ENCODE measurements at regions of chr1 and their contacts with region 1.

Region 1: DNA sequence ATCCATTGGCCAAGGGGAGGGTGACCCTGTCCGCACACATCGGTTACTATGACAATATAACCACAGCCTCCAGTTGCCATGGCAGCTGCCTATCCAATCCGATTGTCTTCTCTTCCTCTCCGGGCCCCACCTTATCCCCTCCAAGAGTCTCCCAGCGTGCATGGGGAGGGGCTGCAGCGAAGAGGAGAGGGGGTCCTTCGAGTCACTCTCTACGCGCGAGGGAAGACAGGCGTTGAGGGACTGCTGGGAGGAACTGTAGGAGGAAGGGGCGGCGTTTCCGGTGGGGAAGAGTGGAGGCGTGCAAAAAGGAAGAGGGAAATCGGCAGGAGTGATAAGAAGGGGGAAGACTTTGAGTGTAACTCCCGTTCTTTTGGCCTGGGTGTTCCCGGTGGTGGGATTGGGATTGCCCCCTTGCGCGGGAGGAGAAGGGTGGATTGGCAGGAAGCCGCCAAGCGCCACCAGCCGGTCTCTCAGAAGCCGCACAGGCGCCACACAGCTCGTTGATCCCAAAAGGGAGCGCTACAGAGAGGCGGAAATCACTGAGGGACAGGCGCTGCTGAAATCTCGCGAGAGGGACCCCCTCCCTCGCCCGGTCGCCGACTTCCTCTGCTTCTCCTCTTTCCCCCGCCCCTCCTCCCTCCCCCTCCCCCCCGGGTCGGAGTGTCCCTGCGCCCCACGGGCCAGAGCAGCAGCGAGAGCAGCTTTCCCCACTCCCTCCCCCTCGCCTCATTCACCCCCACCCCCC is 384 bp upstream of the SMG7 start:
- DNase-seq: peak; percentile 99
- ATAC-seq: peak; percentile 61
- H3K4me3 Mint-ChIP-seq: peak overlapping the region; percentile 86
- H3K27ac Mint-ChIP-seq: peak overlapping the region; percentile 99
- H3K4me1 Mint-ChIP-seq: peaks cover 26% of the 10 kb centered on the region
- H3K27me3 Mint-ChIP-seq: no peaks in the 10 kb centered on the region

Region 2: GRCh38 chr1:182415789-182416188 is 1056.1 kb before region 1 on chr1:
- CTCF ChIA-PET with region 1: no interaction called
- POLR2A ChIA-PET with region 1: no interaction called
- intact Hi-C with region 1: no loop called
- DNase-seq: no peak
- ATAC-seq: peak; percentile 64
- H3K4me3 Mint-ChIP-seq: no peak overlapping the region
- H3K27ac Mint-ChIP-seq: no peak overlapping the region
- H3K4me1 Mint-ChIP-seq: no peaks in the 10 kb centered on the region
- H3K27me3 Mint-ChIP-seq: peaks cover 31% of the 10 kb centered on the region

Region 3: DNA sequence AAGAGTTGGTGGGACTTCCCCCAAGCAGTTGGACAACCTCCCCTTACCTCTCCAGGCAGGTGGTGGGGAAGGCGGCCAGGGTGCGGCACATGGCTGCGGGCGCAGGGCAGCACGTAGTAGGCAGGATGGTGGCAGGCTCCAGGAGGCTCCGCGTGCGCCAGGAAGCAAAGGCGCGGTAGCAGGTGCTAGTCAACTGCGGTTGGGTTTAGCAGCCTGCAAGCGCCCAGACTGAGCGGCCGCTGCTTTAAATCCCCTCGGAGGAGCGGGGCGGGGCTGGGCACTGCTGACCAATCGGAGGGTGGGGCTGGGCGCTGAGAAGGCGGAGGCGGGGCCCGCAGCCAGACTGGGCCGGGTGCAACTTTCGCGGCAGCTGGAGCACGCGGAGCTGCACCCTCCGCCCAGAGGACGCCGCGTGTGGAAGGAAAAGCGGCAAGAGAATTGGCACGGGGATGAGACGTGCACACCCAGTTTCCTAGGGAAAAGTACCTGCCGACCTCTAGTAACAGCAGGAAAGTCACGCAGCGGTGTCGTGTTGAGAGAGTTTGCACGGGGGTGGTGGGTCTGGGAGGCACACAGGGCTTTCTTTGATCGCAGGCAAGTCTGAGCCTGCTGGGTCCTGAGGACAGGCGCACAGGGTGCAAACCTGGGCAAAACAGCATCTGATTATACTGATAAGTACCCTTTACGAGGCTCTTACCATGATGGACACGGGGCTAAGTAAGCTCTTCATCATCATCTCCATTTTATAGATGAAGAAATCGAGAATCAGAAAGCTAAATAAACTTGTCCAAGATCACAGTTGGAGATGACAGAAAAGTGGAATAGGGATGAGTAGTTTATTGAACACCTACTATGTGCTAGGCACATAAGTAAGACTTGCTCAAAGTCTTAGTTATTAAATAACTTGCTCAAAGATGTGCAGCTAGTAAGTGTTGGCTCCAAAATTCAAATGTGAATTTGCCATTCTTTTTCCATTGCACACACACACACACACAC is 867.4 kb before region 1 on chr1 and contains the start of gene RGS16:
- CTCF ChIA-PET with region 1: no interaction called
- POLR2A ChIA-PET with region 1: no interaction called
- intact Hi-C with region 1: loop called in 1 of 2 experiments (anchors 10 kb)
- DNase-seq: peak; percentile 97
- ATAC-seq: peak; percentile 88
- H3K4me3 Mint-ChIP-seq: no peak within 1 kb of the TSS
- H3K27ac Mint-ChIP-seq: peak within 1 kb of the TSS; percentile 70
- H3K4me1 Mint-ChIP-seq: peaks cover 43% of the 10 kb centered on the region
- H3K27me3 Mint-ChIP-seq: peaks cover 6% of the 10 kb centered on the region
- total RNA-seq, gene RGS16: 27.2 to 30.6 TPM

Region 4: GRCh38 chr1:183498342-183498991 is 26.6 kb after region 1 on chr1:
- CTCF ChIA-PET with region 1: interaction called, 4 read pairs
- POLR2A ChIA-PET with region 1: no interaction called
- intact Hi-C with region 1: loop called in 1 of 2 experiments (anchors 2 kb)
- DNase-seq: peak; percentile 14
- ATAC-seq: peak; percentile 86
- H3K4me3 Mint-ChIP-seq: no peak overlapping the region
- H3K27ac Mint-ChIP-seq: peak overlapping the region; percentile 73
- H3K4me1 Mint-ChIP-seq: peaks cover 62% of the 10 kb centered on the region
- H3K27me3 Mint-ChIP-seq: no peaks in the 10 kb centered on the region

Region 5: GRCh38 chr1:183533617-183534174 is 61.8 kb after region 1 on chr1:
- CTCF ChIA-PET with region 1: no interaction called
- POLR2A ChIA-PET with region 1: no interaction called
- intact Hi-C with region 1: no loop called
- DNase-seq: no peak
- ATAC-seq: no peak
- H3K4me3 Mint-ChIP-seq: no peak overlapping the region
- H3K27ac Mint-ChIP-seq: no peak overlapping the region
- H3K4me1 Mint-ChIP-seq: peaks cover 4% of the 10 kb centered on the region
- H3K27me3 Mint-ChIP-seq: no peaks in the 10 kb centered on the region

Region 6: GRCh38 chr1:183572721-183573120 is 100.8 kb after region 1 on chr1:
- CTCF ChIA-PET with region 1: no interaction called
- POLR2A ChIA-PET with region 1: no interaction called
- intact Hi-C with region 1: no loop called
- DNase-seq: no peak
- ATAC-seq: no peak
- H3K4me3 Mint-ChIP-seq: no peak overlapping the region
- H3K27ac Mint-ChIP-seq: no peak overlapping the region
- H3K4me1 Mint-ChIP-seq: peaks cover 17% of the 10 kb centered on the region
- H3K27me3 Mint-ChIP-seq: no peaks in the 10 kb centered on the region

Region 7: DNA sequence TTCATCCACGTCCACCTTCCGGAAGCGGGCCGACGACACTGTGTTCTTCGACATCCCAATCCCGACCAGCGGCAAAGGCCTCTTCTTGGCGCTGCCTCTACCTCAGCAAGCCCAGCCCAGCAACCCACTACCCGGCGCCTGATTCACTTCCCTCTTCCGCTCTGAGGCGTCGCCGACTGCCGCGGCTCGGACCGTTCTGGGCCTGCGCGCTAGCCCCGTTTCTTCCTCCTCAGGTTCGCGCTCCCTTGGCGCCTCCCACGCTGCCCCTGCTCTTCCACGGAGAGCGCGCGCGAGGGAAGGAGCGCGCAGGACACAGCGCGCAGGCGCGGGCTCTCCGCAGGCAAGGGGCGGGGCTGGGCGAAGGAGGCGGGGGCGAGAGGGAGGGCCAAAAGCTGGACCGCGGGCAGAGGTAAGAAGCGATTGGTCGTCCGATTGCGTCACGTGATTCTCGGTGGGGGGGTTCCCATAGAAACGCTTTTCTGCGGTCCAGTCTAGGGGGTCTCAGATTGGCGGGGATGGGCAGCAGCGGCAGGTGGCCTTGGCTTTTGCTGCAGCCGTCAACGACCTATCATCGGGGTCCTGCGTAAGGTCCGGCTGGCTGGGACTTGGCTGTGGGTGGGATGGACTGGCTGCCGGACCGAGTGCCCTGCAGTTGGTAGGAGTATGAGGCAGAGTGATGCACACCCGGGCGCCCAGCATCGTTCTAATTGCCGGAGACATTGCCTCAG is 163.9 kb after region 1 on chr1 and contains the start of gene ARPC5:
- CTCF ChIA-PET with region 1: interaction called, 4 read pairs
- POLR2A ChIA-PET with region 1: interaction called, 3 read pairs
- intact Hi-C with region 1: loop called (anchors 1 to 2 kb)
- DNase-seq: peak; percentile 98
- ATAC-seq: peak; percentile 90
- H3K4me3 Mint-ChIP-seq: peak within 1 kb of the TSS; percentile 97
- H3K27ac Mint-ChIP-seq: peak within 1 kb of the TSS; percentile 100
- H3K4me1 Mint-ChIP-seq: peaks cover 32% of the 10 kb centered on the region
- H3K27me3 Mint-ChIP-seq: no peaks in the 10 kb centered on the region
- total RNA-seq, gene ARPC5: 115 to 165 TPM

Region 8: DNA sequence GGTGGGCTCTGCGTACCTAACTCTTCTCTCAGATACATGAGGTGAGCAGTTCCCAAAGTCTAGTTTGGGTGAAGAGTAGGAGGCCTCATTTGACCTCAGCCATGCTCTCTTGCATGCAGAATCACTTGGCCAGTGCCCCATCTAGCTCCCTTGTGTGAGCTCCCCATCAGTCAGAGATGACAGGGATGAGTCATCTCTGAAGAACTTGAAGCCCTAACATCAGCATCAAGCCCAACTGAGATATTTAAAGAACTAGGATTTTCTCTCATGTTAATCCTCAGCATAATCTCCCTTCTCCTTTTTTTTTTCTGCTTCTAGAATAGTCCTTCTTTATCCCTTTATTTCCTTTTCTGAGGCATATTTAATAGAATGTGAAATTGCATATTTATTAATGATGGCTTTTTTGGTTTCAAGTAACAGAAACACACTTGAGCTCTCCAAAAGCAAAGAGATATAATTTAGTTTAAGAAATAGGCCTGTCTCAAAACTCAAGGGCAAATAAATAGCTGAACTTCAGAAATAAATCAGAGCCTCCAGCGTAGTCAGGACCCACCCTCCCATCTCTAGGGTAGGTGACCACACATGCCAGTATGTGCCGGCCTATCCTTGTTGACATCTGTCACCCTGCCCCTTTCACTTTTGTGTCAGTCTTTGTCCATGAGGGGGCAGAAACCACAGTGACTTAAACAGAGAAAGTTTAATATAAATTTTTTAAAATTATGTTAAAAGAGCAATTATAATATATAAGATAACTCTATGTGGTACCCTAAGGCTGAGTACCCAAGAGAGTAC is 692.0 kb after region 1 on chr1:
- CTCF ChIA-PET with region 1: no interaction called
- POLR2A ChIA-PET with region 1: no interaction called
- intact Hi-C with region 1: loop called in 1 of 2 experiments (anchors 1 kb)
- DNase-seq: peak; percentile 30
- ATAC-seq: no peak
- H3K4me3 Mint-ChIP-seq: no peak overlapping the region
- H3K27ac Mint-ChIP-seq: no peak overlapping the region
- H3K4me1 Mint-ChIP-seq: peaks cover 3% of the 10 kb centered on the region
- H3K27me3 Mint-ChIP-seq: no peaks in the 10 kb centered on the region

Region 9: GRCh38 chr1:185044981-185045813 is 1573.3 kb after region 1 on chr1 and contains the start of gene RNF2:
- CTCF ChIA-PET with region 1: no interaction called
- POLR2A ChIA-PET with region 1: no interaction called
- intact Hi-C with region 1: loop called in 1 of 2 experiments (anchors 5 kb)
- DNase-seq: peak; percentile 87
- ATAC-seq: peak; percentile 87
- H3K4me3 Mint-ChIP-seq: peak within 1 kb of the TSS; percentile 94
- H3K27ac Mint-ChIP-seq: peak within 1 kb of the TSS; percentile 86
- H3K4me1 Mint-ChIP-seq: peaks cover 34% of the 10 kb centered on the region
- H3K27me3 Mint-ChIP-seq: no peaks in the 10 kb centered on the region
- total RNA-seq, gene RNF2: 19.6 to 23.6 TPM

Measured in activated CD4-positive, alpha-beta T cell treated with anti-CD3 and anti-CD28 coated beads for 36 hours (primary cell).